ENCODE measurements at regions of chr1 and their contacts with region 1.

Region 1: GRCh38 chr1:236860101-236860500 is 65.0 kb downstream of the MTR start:
- DNase-seq: no peak
- ATAC-seq: no peak
- H3K4me3 ChIP-seq: no peak overlapping the region
- H3K27ac ChIP-seq: no peak overlapping the region
- H3K4me1 ChIP-seq: no peaks in the 10 kb centered on the region
- H3K27me3 ChIP-seq: no peaks in the 10 kb centered on the region
- CTCF ChIP-seq: no peak
- POLR2A ChIP-seq: no peak
- RAD21 ChIP-seq: no peak

Region 2: DNA sequence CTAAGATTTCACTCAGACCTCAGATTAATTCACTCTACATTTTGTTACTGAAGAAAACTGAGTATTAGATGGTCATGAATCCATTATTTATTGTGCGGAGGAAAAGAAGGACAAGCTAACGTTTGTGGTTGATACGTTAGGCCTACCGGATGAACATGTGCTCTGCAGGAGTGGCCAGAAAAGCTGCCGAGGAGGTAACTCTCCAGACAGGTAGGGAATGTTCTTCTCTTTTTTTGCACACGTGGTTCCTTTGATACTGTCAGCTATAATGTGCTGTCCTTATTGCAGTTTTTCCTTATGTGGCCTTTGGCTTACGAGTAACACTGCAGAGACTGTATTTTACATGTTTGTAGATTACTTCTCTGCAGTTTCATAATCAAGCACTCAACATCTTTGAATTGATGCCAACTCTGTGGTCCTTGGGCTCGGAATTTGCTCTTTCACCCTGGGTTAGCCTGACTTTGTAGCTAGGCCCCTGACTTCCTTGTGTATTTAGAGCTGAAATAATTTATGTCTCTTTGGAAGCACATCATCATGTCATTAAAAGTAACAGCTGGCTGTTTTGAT is 51.5 kb before region 1 on chr1:
- CTCF ChIA-PET with region 1: no interaction called
- POLR2A ChIA-PET with region 1: interaction called, 12 read pairs
- dilution Hi-C with region 1: no loop called
- in situ Hi-C with region 1: no loop called
- intact Hi-C with region 1: no loop called
- DNase-seq: peak; percentile 21
- ATAC-seq: peak; percentile 40
- H3K4me3 ChIP-seq: no peak overlapping the region
- H3K27ac ChIP-seq: no peak overlapping the region
- H3K4me1 ChIP-seq: peaks cover 11% of the 10 kb centered on the region; the same call in 1 of the 2 replicates
- H3K27me3 ChIP-seq: no peaks in the 10 kb centered on the region
- CTCF ChIP-seq: no peak
- POLR2A ChIP-seq: no peak
- RAD21 ChIP-seq: no peak

Region 3: GRCh38 chr1:236893626-236894545 is 33.8 kb after region 1 on chr1:
- CTCF ChIA-PET with region 1: no interaction called
- POLR2A ChIA-PET with region 1: no interaction called
- dilution Hi-C with region 1: no loop called
- in situ Hi-C with region 1: no loop called
- intact Hi-C with region 1: no loop called
- DNase-seq: peak; percentile 66
- ATAC-seq: peak; percentile 77
- H3K4me3 ChIP-seq: no peak overlapping the region
- H3K27ac ChIP-seq: no peak overlapping the region
- H3K4me1 ChIP-seq: no peaks in the 10 kb centered on the region
- H3K27me3 ChIP-seq: no peaks in the 10 kb centered on the region
- CTCF ChIP-seq: no peak
- POLR2A ChIP-seq: no peak
- RAD21 ChIP-seq: no peak